A673 (cell line): ENCODE measurements at regions of chr16 and their contacts with region 1.

Region 1: DNA sequence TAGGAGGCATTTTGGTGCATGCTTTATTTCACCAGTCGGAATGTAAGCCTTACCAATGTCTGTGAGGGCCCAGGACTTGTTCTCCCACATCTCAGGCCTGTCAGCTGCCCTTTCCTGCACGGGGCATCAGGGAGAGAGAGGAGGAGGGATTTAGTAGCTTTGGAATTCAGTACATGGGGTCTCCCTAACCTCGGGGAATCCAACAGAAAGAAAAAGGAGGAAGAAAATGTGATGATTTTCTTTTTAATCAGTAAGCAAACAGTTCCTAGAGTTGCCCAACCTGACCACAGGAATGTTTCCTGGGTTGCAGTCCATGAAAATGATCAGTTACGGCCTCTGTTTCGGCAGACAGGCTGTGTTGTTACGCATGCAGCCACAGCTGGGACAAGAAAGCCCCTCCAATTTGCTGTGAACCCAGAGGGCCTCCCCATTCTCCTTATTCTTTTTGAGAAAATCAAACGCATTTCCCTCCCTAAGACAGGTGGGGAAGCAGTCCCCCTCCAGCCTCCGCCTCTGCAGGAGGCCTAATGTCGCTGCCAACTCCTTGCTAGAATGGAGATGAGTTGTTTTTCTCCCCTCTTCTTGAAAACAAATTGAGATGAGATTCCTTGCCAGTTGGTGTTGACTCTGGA is 53.1 kb upstream of the TANGO6 start:
- DNase-seq: no peak
- H3K4me3 ChIP-seq: no peak overlapping the region
- H3K27ac ChIP-seq: no peak overlapping the region
- H3K4me1 ChIP-seq: no peaks in the 10 kb centered on the region
- H3K27me3 ChIP-seq: no peaks in the 10 kb centered on the region
- CTCF ChIP-seq: no peak

Region 2: GRCh38 chr16:67183627-67184328 is 1606.5 kb before region 1 on chr16 and contains the start of gene MATCAP1:
- CTCF ChIA-PET with region 1: no interaction called
- POLR2A ChIA-PET with region 1: no interaction called
- intact Hi-C with region 1: no loop called
- DNase-seq: peak; percentile 99
- H3K4me3 ChIP-seq: peak within 1 kb of the TSS; percentile 68
- H3K27ac ChIP-seq: peak within 1 kb of the TSS; percentile 99
- H3K4me1 ChIP-seq: peaks cover 14% of the 10 kb centered on the region
- H3K27me3 ChIP-seq: no peaks in the 10 kb centered on the region
- CTCF ChIP-seq: no peak
- total RNA-seq, gene MATCAP1: 33.9 and 36.8 TPM in 2 replicates

Region 3: GRCh38 chr16:68719993-68720489 is 70.2 kb before region 1 on chr16:
- CTCF ChIA-PET with region 1: no interaction called
- POLR2A ChIA-PET with region 1: interaction called, 23 read pairs
- intact Hi-C with region 1: no loop called
- DNase-seq: no peak
- H3K4me3 ChIP-seq: no peak overlapping the region
- H3K27ac ChIP-seq: no peak overlapping the region
- H3K4me1 ChIP-seq: no peaks in the 10 kb centered on the region
- H3K27me3 ChIP-seq: no peaks in the 10 kb centered on the region
- CTCF ChIP-seq: no peak